PC-3 (cell line): ENCODE measurements at regions of chr1 and their contacts with region 1.

Region 1: GRCh38 chr1:205631727-205632373 is at the start of gene ELK4:
- DNase-seq: peak; percentile 99
- ATAC-seq: peak; percentile 79
- H3K4me3 ChIP-seq: peak within 1 kb of the TSS; percentile 86
- H3K27ac ChIP-seq: peak within 1 kb of the TSS; percentile 76
- H3K4me1 ChIP-seq: peaks cover 24% of the 10 kb centered on the region
- H3K27me3 ChIP-seq: no peaks in the 10 kb centered on the region
- CTCF ChIP-seq: peak; percentile 72
- total RNA-seq, gene ELK4: 16.3 and 16.4 TPM in 2 replicates

Region 2: GRCh38 chr1:205430696-205431305 is 201.0 kb before region 1 on chr1:
- CTCF ChIA-PET with region 1: no interaction called
- POLR2A ChIA-PET with region 1: no interaction called
- intact Hi-C with region 1: no loop called
- DNase-seq: peak; percentile 22
- ATAC-seq: no peak; the same call in 1 of the 2 replicates
- H3K4me3 ChIP-seq: peak overlapping the region; percentile 46; the same call in 1 of the 2 replicates
- H3K27ac ChIP-seq: no peak overlapping the region
- H3K4me1 ChIP-seq: no peaks in the 10 kb centered on the region
- H3K27me3 ChIP-seq: peaks cover 34% of the 10 kb centered on the region
- CTCF ChIP-seq: peak; percentile 76

Region 3: GRCh38 chr1:205543411-205544301 is 88.2 kb before region 1 on chr1:
- CTCF ChIA-PET with region 1: no interaction called
- POLR2A ChIA-PET with region 1: interaction called, 10 read pairs
- intact Hi-C with region 1: loop called (anchors 1 kb)
- DNase-seq: peak; percentile 99
- ATAC-seq: peak; percentile 86
- H3K4me3 ChIP-seq: peak overlapping the region; percentile 59
- H3K27ac ChIP-seq: peak overlapping the region; percentile 99
- H3K4me1 ChIP-seq: peaks cover 33% of the 10 kb centered on the region
- H3K27me3 ChIP-seq: no peaks in the 10 kb centered on the region
- CTCF ChIP-seq: peak; percentile 37

Region 4: DNA sequence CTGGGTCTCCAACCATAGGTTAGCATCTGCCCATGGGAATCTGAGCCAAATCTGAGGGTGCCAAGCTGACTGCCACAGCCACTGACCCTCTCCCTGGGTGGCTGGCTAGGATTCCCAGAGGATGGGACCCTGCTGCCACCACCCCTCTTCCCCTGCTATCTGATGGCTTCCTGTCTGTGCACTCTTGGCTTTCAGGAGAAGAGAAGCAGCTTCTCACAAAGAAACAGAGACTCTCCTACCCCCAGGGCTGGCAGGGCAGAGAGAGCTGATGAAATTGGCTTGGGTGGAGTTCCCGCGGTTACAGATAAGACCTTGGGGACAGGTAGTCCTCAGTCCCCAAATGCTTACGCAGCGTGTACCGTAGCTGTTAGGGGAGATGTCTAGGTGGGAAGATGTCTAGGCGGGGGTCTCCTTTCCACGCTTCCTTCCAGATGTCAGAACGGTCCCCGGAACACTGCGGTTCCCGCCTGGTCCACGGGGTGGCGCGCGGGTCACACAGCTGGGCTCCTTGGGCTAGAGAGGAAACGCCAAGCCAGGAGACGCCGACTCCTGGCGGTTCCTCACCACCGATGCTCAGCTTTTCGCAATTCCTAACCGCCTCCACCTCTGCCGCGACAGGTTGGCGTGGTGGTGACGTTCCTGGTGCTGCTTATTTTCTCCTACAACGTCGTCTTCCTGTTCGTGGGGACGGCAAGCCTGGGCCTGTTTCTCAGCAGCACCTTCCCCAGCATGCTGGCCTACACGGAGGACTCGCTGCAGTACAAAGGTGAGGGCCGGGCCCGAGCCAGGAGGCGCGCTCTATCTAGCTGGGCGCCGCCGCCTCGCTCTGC is 40.1 kb before region 1 on chr1:
- CTCF ChIA-PET with region 1: interaction called, 21 read pairs
- POLR2A ChIA-PET with region 1: interaction called, 4 read pairs
- intact Hi-C with region 1: loop called (anchors 1 kb)
- DNase-seq: peak; percentile 91
- ATAC-seq: peak; percentile 84
- H3K4me3 ChIP-seq: peak overlapping the region; percentile 63
- H3K27ac ChIP-seq: no peak overlapping the region
- H3K4me1 ChIP-seq: peaks cover 3% of the 10 kb centered on the region; the same call in 1 of the 2 replicates
- H3K27me3 ChIP-seq: no peaks in the 10 kb centered on the region
- CTCF ChIP-seq: peak; percentile 98